AG04450 (cell line): ENCODE measurements at regions of chr2 and their contacts with region 1.

Region 1: GRCh38 chr2:99389371-99389770 is 52.2 kb downstream of the EIF5B start:
- DNase-seq: peak; percentile 41
- H3K4me3 ChIP-seq: no peak overlapping the region
- H3K27ac ChIP-seq: no peak overlapping the region
- H3K27me3 ChIP-seq: no peaks in the 10 kb centered on the region
- CTCF ChIP-seq: no peak

Region 2: GRCh38 chr2:99085421-99085820 is 303.9 kb before region 1 on chr2:
- CTCF ChIA-PET with region 1: interaction called, 14 read pairs
- POLR2A ChIA-PET with region 1: no interaction called
- DNase-seq: no peak
- H3K4me3 ChIP-seq: no peak overlapping the region
- H3K27ac ChIP-seq: no peak overlapping the region
- H3K27me3 ChIP-seq: peaks cover 2% of the 10 kb centered on the region
- CTCF ChIP-seq: peak; percentile 26; the same call in 1 of the 2 replicates